Mammary epithelial cell (primary cell): ENCODE measurements at regions of chr11 and their contacts with region 1.

Region 1: DNA sequence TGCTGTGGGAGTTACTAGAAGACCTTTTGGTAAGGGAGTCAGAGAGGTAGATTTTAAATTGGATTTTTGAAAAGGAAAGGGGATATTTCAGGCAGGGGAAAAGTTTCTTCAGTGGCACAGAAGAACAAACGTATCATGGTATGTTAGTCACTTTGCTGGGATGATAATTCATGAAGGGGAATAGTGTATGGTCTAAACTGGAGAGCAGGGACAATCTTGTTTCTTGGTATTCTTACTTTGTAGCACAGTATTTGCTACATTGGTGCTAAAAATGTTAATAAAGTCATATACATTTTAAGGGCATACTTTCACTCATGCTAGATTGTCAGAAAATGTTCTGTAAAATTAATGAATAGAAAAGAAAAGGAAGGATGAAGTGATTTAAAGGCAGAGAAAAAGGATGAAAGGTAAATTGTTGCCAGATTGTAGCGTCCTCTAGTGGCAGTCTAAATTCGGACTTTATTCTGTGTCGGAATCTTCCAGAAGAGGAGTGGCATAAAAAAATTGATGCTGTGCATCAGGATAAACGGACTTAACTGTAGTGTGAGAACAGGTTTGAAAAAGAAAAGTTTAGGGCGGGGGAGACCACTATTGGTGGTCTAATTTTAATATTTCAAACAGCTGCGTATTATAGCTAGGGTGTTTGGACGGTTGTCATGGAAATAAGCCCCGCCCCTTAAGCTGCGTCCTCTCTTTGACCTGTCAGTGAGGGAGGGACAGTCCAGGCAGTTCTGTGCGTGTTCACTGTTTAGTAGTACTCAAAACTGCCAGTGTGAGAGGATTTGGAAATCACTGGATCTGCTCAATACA is at the start of gene BCO2:
- DNase-seq: peak; percentile 85
- H3K4me3 ChIP-seq: peak within 1 kb of the TSS; percentile 26 to 56 (median 47)
- H3K27ac ChIP-seq: peak within 1 kb of the TSS; percentile 88
- H3K4me1 ChIP-seq: peaks cover 10% of the 10 kb centered on the region
- H3K27me3 ChIP-seq: no peaks in the 10 kb centered on the region
- CTCF ChIP-seq: peak; percentile 91 to 97
- total RNA-seq, gene BCO2: 3.8 to 4.9 TPM

Region 2: DNA sequence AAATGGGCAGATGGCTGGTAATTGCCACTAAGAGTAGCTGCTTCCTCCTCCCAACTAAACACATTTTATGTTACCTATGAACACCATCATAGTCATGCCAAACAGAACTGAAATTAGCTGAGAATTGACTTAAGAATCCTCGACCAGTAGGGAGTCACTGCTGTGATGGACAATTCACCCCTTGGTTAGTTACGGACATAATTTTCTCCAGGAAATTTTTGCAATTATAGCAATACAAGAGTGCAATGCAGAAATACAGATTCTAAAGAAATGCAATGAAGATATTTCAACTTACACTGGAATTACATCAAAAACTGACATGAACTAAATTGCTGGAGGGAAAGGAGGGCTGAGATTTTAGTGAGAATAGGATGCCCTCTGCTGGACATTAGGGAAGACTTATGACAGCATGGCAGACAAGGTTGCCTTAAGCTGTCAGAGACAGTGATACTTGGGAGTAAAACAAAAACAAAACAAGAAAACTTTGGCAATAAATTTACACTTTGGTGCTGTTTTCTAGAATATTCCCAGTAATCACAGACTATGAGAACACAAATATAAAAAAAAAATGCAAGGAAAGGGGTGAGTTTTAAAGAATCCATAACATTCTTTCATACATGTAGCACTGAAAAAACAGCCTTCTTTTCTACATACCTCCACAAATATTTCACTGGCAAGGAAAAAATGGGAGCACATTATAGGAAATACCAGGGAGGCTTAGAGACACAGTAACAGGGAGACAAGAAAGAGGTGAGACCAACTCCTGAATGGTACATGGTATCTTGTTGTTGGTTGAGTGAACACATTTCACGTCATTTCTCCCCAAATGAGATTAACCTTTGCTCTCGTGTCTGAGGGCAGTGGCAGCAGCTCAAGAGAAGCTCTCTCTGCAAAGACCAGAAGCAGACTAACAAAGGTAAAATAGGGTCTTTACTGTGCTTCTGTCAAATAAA is 397.6 kb before region 1 on chr11:
- CTCF ChIA-PET with region 1: no interaction called
- dilution Hi-C with region 1: no loop called
- in situ Hi-C with region 1: no loop called
- intact Hi-C with region 1: no loop called
- DNase-seq: peak; percentile 51
- H3K4me3 ChIP-seq: no peak overlapping the region
- H3K27ac ChIP-seq: no peak overlapping the region
- H3K4me1 ChIP-seq: no peaks in the 10 kb centered on the region
- H3K27me3 ChIP-seq: no peaks in the 10 kb centered on the region
- CTCF ChIP-seq: peak; percentile 68 to 78

Region 3: DNA sequence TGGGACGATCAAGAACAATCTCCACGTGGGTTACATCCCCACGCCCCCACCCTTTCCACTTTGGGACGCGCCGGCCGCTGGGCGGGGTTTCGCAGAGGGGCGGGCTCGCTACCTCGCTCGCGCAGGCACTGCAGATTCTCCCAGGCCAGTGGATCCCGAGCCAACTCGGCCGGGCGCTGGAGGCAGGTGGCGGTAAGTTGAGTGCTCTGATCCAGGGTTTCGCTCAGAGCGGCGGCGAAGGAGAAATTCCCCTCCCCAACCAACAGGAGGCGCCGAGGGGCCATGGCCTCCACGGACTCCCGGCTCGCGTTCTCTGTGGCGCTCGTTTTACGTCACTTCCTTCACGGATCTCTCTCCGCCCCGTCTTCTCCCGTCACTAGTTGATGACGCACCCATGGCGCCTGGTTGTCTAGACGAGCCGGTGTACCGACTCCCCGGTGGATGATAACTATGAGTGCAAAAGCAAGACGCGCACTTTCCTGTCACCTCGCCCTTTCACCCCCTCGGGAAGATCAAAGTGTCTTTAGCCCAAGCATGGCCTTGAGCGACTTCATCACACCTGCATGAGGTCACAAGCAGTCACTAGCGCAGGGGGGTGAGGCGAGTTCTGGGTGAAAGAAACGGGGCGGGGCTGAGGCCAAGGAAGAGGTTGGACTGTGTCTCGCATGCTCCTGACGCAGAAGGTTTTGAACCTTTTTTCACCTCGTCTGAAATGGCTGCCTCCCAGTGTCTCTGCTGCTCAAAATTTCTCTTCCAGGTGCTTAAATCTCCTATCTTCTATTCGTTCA is 296.0 kb before region 1 on chr11 and contains the starts of genes CFAP68 and FDXACB1:
- CTCF ChIA-PET with region 1: no interaction called
- dilution Hi-C with region 1: no loop called
- in situ Hi-C with region 1: no loop called
- intact Hi-C with region 1: loop called (anchors 1 kb)
- DNase-seq: peak; percentile 98
- H3K4me3 ChIP-seq: peak within 1 kb of the TSS; percentile 69 to 91 (median 73)
- H3K27ac ChIP-seq: peak within 1 kb of the TSS; percentile 99
- H3K4me1 ChIP-seq: peaks cover 8% of the 10 kb centered on the region
- H3K27me3 ChIP-seq: no peaks in the 10 kb centered on the region
- CTCF ChIP-seq: peak; percentile 90 to 95
- total RNA-seq, gene CFAP68: 12.5 to 23.7 TPM
- total RNA-seq, gene FDXACB1: 0.96 to 2.3 TPM

Region 4: DNA sequence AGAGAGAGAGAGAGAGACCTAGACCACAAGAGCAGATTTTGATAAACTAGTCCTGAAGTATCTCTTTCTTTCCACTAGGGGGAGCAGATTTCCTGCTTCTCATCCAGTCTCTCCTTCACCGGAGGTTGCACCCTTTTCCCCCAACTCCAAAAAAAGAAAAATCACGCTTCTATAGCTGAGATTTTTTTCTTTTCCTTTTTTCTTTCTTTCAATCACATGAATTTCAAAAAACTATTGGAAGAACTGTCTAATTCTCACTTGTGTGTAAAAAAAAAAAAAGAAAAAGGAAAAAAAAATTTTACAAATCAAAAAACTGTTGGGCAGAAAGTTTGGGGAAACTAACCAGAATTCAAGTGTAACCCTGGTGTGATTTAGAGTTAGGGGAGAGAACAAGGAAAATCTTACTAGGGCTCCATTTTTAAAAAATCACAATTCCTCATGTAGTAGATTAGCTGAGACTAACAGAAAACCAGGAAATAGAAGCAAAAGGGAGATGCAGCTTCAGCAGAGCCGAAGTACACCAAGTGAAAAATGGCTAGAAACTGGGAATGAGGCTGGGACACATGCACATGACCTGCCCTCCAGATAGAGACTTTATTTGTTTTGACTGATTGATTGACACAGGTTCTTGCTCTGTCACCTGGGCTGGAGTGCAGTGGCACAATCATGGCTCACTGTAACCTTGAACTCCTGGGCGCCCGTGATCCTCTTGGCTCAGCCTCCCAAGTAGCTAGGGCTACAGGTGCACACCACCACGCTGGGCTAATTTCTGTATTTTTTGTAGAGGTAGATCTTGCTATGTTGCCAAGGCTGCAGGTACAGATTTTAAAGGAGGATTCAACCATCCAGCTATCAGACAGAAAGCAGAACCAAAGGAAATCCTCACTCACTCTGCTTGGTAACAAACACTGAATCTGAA is 61.2 kb before region 1 on chr11:
- CTCF ChIA-PET with region 1: interaction called, 5 read pairs
- dilution Hi-C with region 1: no loop called
- in situ Hi-C with region 1: loop called in 1 of 2 experiments (anchors 10 kb)
- intact Hi-C with region 1: loop called (anchors 1 kb)
- DNase-seq: peak; percentile 54
- H3K4me3 ChIP-seq: no peak overlapping the region
- H3K27ac ChIP-seq: no peak overlapping the region
- H3K4me1 ChIP-seq: no peaks in the 10 kb centered on the region
- H3K27me3 ChIP-seq: no peaks in the 10 kb centered on the region
- CTCF ChIP-seq: peak; percentile 37 to 70

Region 5: GRCh38 chr11:112156956-112157766 is 17.8 kb before region 1 on chr11:
- CTCF ChIA-PET with region 1: no interaction called
- dilution Hi-C with region 1: no loop called
- in situ Hi-C with region 1: no loop called
- intact Hi-C with region 1: loop called (anchors 1 kb)
- DNase-seq: peak; percentile 100
- H3K4me3 ChIP-seq: no peak overlapping the region
- H3K27ac ChIP-seq: peak overlapping the region; percentile 95
- H3K4me1 ChIP-seq: peaks cover 44% of the 10 kb centered on the region
- H3K27me3 ChIP-seq: no peaks in the 10 kb centered on the region
- CTCF ChIP-seq: no peak

Region 6: DNA sequence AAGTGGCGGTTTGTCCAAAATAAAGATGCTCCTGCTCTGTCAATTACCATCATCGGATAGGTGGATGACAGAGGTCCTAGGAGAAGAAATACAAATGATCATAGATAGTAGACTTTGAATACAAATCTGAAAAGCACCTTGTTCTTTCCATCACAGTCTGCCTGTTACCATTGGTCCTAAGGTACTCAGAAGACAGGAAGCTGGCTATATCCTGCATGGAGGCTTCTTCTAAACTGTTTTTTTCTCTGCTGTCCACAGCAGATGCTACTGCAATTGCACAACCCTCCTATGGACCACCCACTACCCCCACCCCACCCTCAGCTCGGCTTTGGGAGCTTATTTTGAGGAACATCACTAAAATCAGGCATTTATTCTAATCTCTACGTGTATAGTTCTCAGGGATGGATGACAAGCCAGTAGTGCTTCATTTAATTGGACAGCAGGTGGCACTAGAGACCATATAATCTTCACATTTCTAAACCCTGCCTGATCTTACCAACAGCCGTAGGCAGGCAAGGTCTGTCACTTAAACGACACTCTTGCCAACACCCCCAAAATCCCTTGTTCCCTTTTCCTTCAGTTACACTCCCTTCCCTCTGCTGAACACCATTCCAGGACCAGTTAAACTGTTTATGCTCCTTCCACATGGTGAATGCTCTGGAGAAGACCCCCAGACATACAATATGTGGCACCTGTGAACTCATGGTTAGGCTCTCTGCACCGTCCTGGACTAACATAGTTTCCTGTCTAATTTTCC is 44.7 kb after region 1 on chr11:
- CTCF ChIA-PET with region 1: no interaction called
- dilution Hi-C with region 1: no loop called
- in situ Hi-C with region 1: no loop called
- intact Hi-C with region 1: loop called (anchors 2 kb)
- DNase-seq: peak; percentile 53
- H3K4me3 ChIP-seq: no peak overlapping the region
- H3K27ac ChIP-seq: no peak overlapping the region
- H3K4me1 ChIP-seq: peaks cover 6% of the 10 kb centered on the region
- H3K27me3 ChIP-seq: no peaks in the 10 kb centered on the region
- CTCF ChIP-seq: peak; percentile 63 to 64

Region 7: GRCh38 chr11:112392904-112393303 is 217.9 kb after region 1 on chr11:
- CTCF ChIA-PET with region 1: no interaction called
- dilution Hi-C with region 1: no loop called
- in situ Hi-C with region 1: no loop called
- intact Hi-C with region 1: no loop called
- DNase-seq: no peak
- H3K4me3 ChIP-seq: no peak overlapping the region
- H3K27ac ChIP-seq: no peak overlapping the region
- H3K4me1 ChIP-seq: no peaks in the 10 kb centered on the region
- H3K27me3 ChIP-seq: no peaks in the 10 kb centered on the region
- CTCF ChIP-seq: no peak